MCF 10A (cell line): ENCODE measurements at regions of chr1 and their contacts with region 1.

Region 1: GRCh38 chr1:25430666-25431505 is at the start of gene MACO1:
- DNase-seq: peak; percentile 96
- H3K4me3 Mint-ChIP-seq: peak within 1 kb of the TSS; percentile 89
- H3K27ac Mint-ChIP-seq: peak within 1 kb of the TSS; percentile 92
- H3K4me1 Mint-ChIP-seq: peaks cover 27% of the 10 kb centered on the region
- H3K27me3 Mint-ChIP-seq: no peaks in the 10 kb centered on the region
- CTCF ChIP-seq: no peak
- total RNA-seq, gene MACO1: 17.4 and 19.3 TPM in 2 replicates

Region 2: DNA sequence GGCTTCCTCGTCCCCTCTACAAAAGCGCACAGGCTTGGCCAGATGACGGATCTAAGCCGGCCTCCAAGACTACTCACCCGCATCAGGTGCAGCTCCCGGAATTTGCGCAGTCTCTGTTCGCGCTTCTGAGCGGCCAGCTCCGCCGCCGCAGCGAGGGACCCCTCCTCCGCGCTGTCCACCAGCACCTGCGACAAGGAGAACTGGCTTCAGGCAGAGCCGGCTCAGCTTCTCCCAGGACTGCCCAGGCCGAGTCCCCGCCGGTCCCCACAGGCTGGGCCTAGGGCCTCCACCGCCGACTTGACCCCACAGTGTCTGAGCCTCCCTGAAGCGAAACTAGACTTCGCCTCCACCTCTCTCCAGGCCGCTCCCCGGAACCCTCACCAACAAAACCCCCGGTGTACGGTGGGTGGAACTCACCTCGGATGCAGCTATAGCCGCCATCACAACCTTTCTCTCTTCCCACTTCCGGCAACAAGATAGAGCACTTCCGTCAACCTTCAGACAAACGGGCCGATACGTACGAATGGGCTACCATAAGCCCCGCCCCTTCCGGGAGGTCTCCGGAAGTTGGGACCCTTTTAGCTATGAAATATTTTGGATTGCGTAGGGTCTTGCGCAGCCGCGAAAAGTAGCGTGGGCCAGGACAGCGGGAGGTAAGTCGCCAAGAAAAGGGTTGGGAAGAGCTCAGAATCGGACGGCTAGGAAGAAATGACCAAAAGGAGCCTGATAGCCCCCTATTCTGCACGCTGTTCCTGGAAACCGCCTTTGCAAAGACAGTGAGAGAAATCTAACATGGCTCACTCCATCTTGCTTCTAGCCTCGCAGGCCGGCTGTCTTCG is 198.6 kb before region 1 on chr1 and contains the start of gene SYF2:
- CTCF ChIA-PET with region 1: no interaction called
- POLR2A ChIA-PET with region 1: interaction called, 11 read pairs
- intact Hi-C with region 1: no loop called
- DNase-seq: peak; percentile 91
- H3K4me3 Mint-ChIP-seq: no peak within 1 kb of the TSS
- H3K27ac Mint-ChIP-seq: no peak within 1 kb of the TSS
- H3K4me1 Mint-ChIP-seq: peaks cover 7% of the 10 kb centered on the region
- H3K27me3 Mint-ChIP-seq: no peaks in the 10 kb centered on the region
- CTCF ChIP-seq: no peak
- total RNA-seq, gene SYF2: 40.5 and 43.0 TPM in 2 replicates

Region 3: DNA sequence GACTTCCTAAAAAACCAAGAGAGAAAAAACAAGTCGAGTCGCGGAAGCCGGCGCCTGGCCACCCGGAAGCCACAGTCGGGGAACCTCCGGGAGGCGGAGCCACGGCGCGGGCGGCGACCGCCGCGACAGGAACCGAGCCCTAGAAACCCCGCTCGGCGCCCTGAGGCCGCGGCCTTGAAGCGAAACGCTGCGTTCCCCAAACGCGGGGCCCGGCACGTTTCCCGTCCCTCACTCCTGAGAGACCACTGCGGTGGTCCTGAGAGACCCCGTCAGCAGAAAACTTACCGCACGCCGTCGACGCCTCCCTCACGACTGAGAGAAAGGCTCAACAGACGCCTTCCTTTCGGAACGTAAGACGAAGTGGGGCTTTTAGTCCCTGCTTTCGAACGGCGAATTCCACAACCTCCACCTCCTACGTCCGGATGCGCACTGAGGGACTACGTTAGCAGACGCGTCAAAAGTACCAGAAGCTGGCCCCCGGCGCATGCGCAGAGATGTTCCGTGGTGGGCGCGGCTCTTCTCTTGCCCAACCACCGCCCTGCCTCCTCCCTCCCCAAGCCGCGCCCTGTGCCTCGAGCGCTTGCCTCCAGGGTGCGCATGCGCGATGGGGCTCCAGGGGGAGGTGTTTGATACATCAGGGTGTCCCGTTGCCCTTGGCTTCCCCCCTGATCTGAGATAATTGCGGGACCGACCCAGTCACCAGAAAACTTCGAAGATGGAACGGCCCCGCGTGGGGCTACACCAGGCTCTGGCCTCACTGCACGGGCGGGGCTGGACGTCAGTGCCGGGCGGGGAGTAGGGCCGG is 183.7 kb before region 1 on chr1 and contains the start of gene RSRP1:
- CTCF ChIA-PET with region 1: no interaction called
- POLR2A ChIA-PET with region 1: interaction called, 13 read pairs
- intact Hi-C with region 1: no loop called
- DNase-seq: peak; percentile 96
- H3K4me3 Mint-ChIP-seq: peak within 1 kb of the TSS; percentile 93
- H3K27ac Mint-ChIP-seq: peak within 1 kb of the TSS; percentile 98
- H3K4me1 Mint-ChIP-seq: peaks cover 13% of the 10 kb centered on the region
- H3K27me3 Mint-ChIP-seq: no peaks in the 10 kb centered on the region
- CTCF ChIP-seq: no peak
- total RNA-seq, gene RSRP1: 77.2 and 86.4 TPM in 2 replicates

Region 4: DNA sequence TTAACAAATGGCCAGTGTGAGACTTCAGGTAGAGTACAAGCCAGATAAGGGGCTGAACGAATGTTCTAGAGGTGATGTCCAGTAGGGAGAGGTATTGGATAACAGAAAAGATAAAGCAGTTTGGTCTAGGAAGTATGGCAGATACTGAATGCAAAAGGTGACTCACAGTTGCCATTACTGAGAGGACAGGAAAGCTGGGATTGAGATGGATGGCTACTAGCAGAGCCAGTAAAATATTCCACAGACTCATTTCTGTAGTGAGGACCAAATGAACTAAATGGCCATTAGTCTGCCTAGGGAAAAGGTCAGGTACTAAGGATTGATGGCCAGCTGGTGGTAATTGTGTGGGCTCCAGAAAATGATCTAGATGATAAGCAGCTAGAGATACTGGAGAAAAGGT is 11.3 kb after region 1 on chr1:
- CTCF ChIA-PET with region 1: interaction called, 3 read pairs
- POLR2A ChIA-PET with region 1: interaction called, 23 read pairs
- intact Hi-C with region 1: no loop called
- DNase-seq: peak; percentile 14
- H3K4me3 Mint-ChIP-seq: no peak overlapping the region
- H3K27ac Mint-ChIP-seq: no peak overlapping the region
- H3K4me1 Mint-ChIP-seq: peaks cover 18% of the 10 kb centered on the region
- H3K27me3 Mint-ChIP-seq: no peaks in the 10 kb centered on the region
- CTCF ChIP-seq: no peak

Region 5: GRCh38 chr1:25460020-25460419 is 29.1 kb after region 1 on chr1:
- CTCF ChIA-PET with region 1: no interaction called
- POLR2A ChIA-PET with region 1: interaction called, 3 read pairs
- intact Hi-C with region 1: loop called (anchors 1 kb)
- DNase-seq: no peak
- H3K4me3 Mint-ChIP-seq: no peak overlapping the region
- H3K27ac Mint-ChIP-seq: no peak overlapping the region
- H3K4me1 Mint-ChIP-seq: no peaks in the 10 kb centered on the region
- H3K27me3 Mint-ChIP-seq: no peaks in the 10 kb centered on the region
- CTCF ChIP-seq: no peak

Region 6: DNA sequence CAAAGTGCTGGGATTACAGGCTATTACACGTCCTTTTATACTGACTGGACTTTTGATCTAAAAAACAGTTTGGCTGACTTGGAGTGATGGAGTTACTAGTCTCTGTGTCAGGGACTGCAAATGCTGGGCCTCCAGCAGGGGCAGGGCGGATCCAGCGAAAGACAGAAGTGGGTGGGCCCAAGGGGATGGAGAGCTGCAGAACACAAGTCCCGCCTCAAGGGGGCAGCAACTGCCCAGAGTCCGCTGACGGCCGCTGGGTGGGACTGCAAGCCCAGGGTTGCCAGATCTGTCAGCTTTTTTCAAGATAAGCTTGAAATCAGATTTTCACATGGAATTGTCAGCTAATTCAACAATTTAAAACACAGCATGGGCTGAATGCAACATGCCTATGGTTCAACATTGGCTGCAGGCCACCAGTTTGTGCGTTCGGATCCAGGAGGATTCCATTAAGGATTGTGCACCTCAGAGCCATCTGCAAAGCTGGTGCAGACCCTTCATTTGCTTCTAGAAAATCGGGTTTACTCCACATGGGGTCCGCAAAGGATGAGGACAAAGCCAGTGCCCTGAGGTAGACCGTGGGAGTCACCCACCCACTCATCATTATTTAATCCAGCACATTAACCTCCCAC is 464.6 kb after region 1 on chr1:
- CTCF ChIA-PET with region 1: no interaction called
- POLR2A ChIA-PET with region 1: no interaction called
- intact Hi-C with region 1: no loop called
- DNase-seq: peak; percentile 85
- H3K4me3 Mint-ChIP-seq: peak overlapping the region; percentile 1
- H3K27ac Mint-ChIP-seq: peak overlapping the region; percentile 16
- H3K4me1 Mint-ChIP-seq: peaks cover 5% of the 10 kb centered on the region
- H3K27me3 Mint-ChIP-seq: no peaks in the 10 kb centered on the region
- CTCF ChIP-seq: peak; percentile 95